A549 (cell line): ENCODE measurements at regions of chr19 and their contacts with region 1.

Region 1: GRCh38 chr19:50804420-50805272 is 14.4 kb downstream of the ACP4 start:
- DNase-seq: peak; percentile 98 to 100
- ATAC-seq: peak; percentile 89 to 95
- H3K4me3 ChIP-seq: peak overlapping the region; percentile 65
- H3K27ac ChIP-seq: peak overlapping the region; percentile 94 to 95
- H3K4me1 ChIP-seq: peaks cover 15% of the 10 kb centered on the region
- CTCF ChIP-seq: no peak
- EP300 ChIP-seq: no peak
- POLR2A ChIP-seq: peak; percentile 97
- RAD21 ChIP-seq: no peak

Region 2: GRCh38 chr19:50794439-50795237 is 10.0 kb before region 1 on chr19:
- CTCF ChIA-PET with region 1: interaction called, 11 read pairs
- POLR2A ChIA-PET with region 1: interaction called, 26 read pairs
- DNase-seq: peak; percentile 67 to 76
- ATAC-seq: peak; percentile 31 to 62
- H3K4me3 ChIP-seq: no peak overlapping the region
- H3K27ac ChIP-seq: no peak overlapping the region
- H3K4me1 ChIP-seq: peaks cover 9% of the 10 kb centered on the region; the same call in 2 of the 3 replicates
- CTCF ChIP-seq: no peak; the same call in 2 of the 3 replicates
- EP300 ChIP-seq: no peak
- POLR2A ChIP-seq: peak; percentile 42
- RAD21 ChIP-seq: no peak